Activated CD4-positive, alpha-beta memory T cell treated with anti-CD3 and anti-CD28 coated beads for 36 hours (primary cell): ENCODE measurements at regions of chr20 and their contacts with region 1.

Region 1: GRCh38 chr20:41003143-41003883 is 25.3 kb upstream of the TOP1 start:
- DNase-seq: peak; percentile 89
- H3K4me3 Mint-ChIP-seq: peak overlapping the region; percentile 67
- H3K27ac Mint-ChIP-seq: peak overlapping the region; percentile 99
- H3K4me1 Mint-ChIP-seq: peaks cover 46% of the 10 kb centered on the region
- H3K27me3 Mint-ChIP-seq: no peaks in the 10 kb centered on the region

Region 2: GRCh38 chr20:40497899-40498691 is 505.2 kb before region 1 on chr20:
- CTCF ChIA-PET with region 1: no interaction called
- POLR2A ChIA-PET with region 1: no interaction called
- intact Hi-C with region 1: no loop called
- DNase-seq: no peak
- H3K4me3 Mint-ChIP-seq: no peak overlapping the region
- H3K27ac Mint-ChIP-seq: no peak overlapping the region
- H3K4me1 Mint-ChIP-seq: no peaks in the 10 kb centered on the region
- H3K27me3 Mint-ChIP-seq: no peaks in the 10 kb centered on the region

Region 3: GRCh38 chr20:40962730-40963504 is 40.4 kb before region 1 on chr20:
- CTCF ChIA-PET with region 1: no interaction called
- POLR2A ChIA-PET with region 1: no interaction called
- intact Hi-C with region 1: no loop called
- DNase-seq: peak; percentile 82
- H3K4me3 Mint-ChIP-seq: no peak overlapping the region
- H3K27ac Mint-ChIP-seq: no peak overlapping the region
- H3K4me1 Mint-ChIP-seq: peaks cover 9% of the 10 kb centered on the region
- H3K27me3 Mint-ChIP-seq: no peaks in the 10 kb centered on the region

Region 4: DNA sequence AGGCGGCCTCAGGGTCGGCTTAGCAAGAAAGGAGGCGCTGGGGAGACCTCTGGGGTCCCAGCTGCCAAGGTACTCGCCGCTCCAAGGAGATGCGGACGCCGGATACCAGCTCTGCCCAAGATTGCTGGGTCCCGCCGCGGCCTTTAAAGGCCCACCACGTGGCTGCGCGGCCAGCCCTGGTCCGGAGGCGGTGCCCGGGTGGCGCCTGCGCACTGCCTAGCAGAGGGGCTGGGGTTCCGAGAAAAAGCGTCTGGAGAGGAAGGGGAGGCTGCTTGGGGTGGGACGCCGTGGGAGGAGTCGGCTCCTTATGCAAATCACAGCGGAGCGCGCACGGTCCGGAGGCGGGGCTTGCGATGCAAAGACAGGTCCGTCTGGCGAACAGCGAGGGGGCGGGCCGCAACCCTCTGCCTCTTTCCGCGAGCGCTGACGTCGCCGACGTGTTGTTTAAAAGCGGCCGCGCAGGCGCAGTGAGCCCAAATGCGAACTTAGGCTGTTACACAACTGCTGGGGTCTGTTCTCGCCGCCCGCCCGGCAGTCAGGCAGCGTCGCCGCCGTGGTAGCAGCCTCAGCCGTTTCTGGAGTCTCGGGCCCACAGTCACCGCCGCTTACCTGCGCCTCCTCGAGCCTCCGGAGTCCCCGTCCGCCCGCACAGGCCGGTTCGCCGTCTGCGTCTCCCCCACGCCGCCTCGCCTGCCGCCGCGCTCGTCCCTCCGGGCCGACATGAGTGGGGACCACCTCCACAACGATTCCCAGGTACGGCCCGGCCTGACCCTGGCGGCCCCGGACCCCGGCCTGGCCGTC is 25.2 kb after region 1 on chr20 and contains the start of gene TOP1:
- CTCF ChIA-PET with region 1: no interaction called
- POLR2A ChIA-PET with region 1: no interaction called
- intact Hi-C with region 1: loop called (anchors 1 kb)
- DNase-seq: peak; percentile 100
- H3K4me3 Mint-ChIP-seq: peak within 1 kb of the TSS; percentile 85
- H3K27ac Mint-ChIP-seq: peak within 1 kb of the TSS; percentile 89
- H3K4me1 Mint-ChIP-seq: peaks cover 47% of the 10 kb centered on the region
- H3K27me3 Mint-ChIP-seq: no peaks in the 10 kb centered on the region
- total RNA-seq, gene TOP1: 128 TPM

Region 5: GRCh38 chr20:41047975-41048305 is 44.6 kb after region 1 on chr20:
- CTCF ChIA-PET with region 1: interaction called, 4 read pairs
- POLR2A ChIA-PET with region 1: no interaction called
- intact Hi-C with region 1: loop called (anchors 1 kb)
- DNase-seq: no peak
- H3K4me3 Mint-ChIP-seq: peak overlapping the region; percentile 76
- H3K27ac Mint-ChIP-seq: peak overlapping the region; percentile 87
- H3K4me1 Mint-ChIP-seq: peaks cover 93% of the 10 kb centered on the region
- H3K27me3 Mint-ChIP-seq: no peaks in the 10 kb centered on the region

Region 6: DNA sequence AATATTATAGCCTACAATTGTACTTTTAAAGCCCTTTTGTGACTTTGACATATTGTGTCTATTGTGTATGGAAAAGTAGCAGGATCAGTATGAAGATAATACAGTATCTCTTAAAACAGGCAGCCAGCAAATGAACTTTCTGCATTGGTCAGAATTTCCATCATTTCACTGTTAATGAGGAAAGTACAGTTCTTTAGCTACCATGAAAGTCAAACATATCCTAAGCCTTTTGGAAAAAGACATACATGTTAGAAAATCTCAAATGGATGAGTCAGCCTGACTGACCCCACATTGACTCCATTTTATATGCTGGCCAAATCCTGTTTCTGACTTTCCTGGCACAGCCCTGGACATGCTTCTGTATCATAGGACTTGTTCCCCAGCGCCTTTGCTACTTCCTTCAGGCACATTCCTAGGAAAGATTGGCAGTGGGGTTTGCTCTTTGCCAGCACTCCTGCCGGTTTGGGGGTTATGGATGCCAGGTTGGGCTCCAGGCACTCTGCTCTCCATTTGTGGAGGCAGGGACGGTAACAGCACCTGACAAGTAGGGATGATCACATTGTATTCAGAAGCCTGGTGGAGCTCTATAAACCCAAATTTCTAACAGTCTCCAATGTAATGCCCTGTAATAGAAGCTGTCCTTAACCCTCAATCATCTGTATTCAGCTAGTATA is 69.0 kb after region 1 on chr20:
- CTCF ChIA-PET with region 1: no interaction called
- POLR2A ChIA-PET with region 1: no interaction called
- intact Hi-C with region 1: loop called (anchors 1 kb)
- DNase-seq: no peak
- H3K4me3 Mint-ChIP-seq: no peak overlapping the region
- H3K27ac Mint-ChIP-seq: peak overlapping the region; percentile 66
- H3K4me1 Mint-ChIP-seq: peaks cover 79% of the 10 kb centered on the region
- H3K27me3 Mint-ChIP-seq: no peaks in the 10 kb centered on the region

Region 7: DNA sequence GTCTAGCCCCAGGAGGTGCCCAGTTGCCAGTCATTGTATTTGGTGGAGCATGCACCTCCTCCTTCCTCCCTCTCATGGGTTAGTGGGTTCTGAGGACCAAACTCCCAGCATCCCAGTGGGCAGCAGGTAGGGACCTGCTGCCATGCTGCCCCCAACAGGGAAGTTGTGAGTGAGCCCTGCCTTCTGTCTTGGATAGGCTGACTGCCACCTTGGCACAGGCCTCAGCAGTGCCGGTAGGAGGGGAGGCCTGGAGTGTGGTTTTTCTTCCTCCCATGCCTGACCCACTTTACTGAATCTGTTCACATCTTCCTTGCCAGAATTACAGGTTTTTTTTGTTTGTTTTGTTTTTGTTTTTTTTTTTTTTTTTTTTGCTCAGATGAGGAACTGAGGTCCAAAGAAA is 158.6 kb after region 1 on chr20:
- CTCF ChIA-PET with region 1: no interaction called
- POLR2A ChIA-PET with region 1: no interaction called
- intact Hi-C with region 1: loop called (anchors 1 kb)
- DNase-seq: no peak
- H3K4me3 Mint-ChIP-seq: no peak overlapping the region
- H3K27ac Mint-ChIP-seq: peak overlapping the region; percentile 84
- H3K4me1 Mint-ChIP-seq: peaks cover 61% of the 10 kb centered on the region
- H3K27me3 Mint-ChIP-seq: no peaks in the 10 kb centered on the region

Region 8: DNA sequence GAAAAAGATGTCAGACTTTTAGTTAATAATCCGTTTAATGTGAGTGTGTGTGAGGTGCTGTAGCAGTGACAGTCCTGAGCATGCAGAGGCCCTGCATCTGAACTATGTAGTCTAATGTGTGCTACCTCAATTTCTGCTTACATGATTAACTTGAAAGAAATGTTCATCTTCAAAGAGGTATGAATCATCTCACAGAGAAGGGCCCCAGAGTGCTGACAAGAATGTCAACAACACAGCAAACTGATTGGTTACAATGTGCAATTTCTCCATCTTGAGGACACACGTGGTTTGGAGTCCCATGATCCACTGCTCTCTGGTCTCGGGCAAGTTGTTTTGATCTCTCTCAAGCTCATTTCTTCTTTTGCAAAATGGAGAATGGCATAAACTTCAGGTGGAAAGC is 425.0 kb after region 1 on chr20:
- CTCF ChIA-PET with region 1: no interaction called
- POLR2A ChIA-PET with region 1: no interaction called
- intact Hi-C with region 1: loop called (anchors 1 kb)
- DNase-seq: peak; percentile 56
- H3K4me3 Mint-ChIP-seq: no peak overlapping the region
- H3K27ac Mint-ChIP-seq: peak overlapping the region; percentile 75
- H3K4me1 Mint-ChIP-seq: peaks cover 31% of the 10 kb centered on the region
- H3K27me3 Mint-ChIP-seq: no peaks in the 10 kb centered on the region